ENCODE measurements at regions of chr20 and their contacts with region 1.

Region 1: GRCh38 chr20:6828794-6829423 is 61.4 kb downstream of the BMP2 start:
- DNase-seq: no peak
- H3K4me3 ChIP-seq: no peak overlapping the region
- H3K27ac ChIP-seq: no peak overlapping the region
- H3K4me1 ChIP-seq: peaks cover 0 to 8% (median 0%) of the 10 kb centered on the region in 6 donors
- H3K27me3 ChIP-seq: no peaks in the 10 kb centered on the region
- CTCF ChIP-seq: peak in 10 of 11 experiments; percentile 8 to 71 (median 60)
- POLR2A ChIP-seq: no peak

Region 2: DNA sequence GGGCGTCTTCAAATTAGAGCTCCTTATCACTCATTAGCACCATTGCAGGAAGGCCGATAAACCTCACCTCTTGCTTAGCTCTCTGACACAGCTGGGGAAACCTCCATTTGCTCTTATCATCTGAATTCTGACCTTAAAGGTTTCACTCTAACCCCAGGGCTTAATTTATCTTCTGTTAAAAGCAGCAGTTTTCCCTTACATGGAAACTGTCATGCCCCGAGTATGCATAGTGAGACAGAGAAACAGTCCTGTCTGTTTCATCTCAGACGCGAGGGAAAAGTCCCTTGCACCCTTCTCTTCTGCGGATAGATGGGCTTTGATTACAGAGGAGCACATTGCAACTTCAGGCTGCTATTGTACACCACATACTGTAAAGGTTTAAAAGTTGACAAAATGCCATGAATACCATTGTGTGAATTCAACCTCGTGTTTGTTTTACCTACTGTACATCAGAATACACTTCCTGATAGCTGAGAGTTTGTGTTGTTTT is 253.0 kb before region 1 on chr20:
- intact Hi-C with region 1: loop called (anchors 10 kb)
- DNase-seq: no peak
- H3K4me3 ChIP-seq: no peak overlapping the region
- H3K27ac ChIP-seq: no peak overlapping the region
- H3K4me1 ChIP-seq: peaks cover 0 to 14% (median 2%) of the 10 kb centered on the region in 6 donors
- H3K27me3 ChIP-seq: no peaks in the 10 kb centered on the region
- CTCF ChIP-seq: no peak
- POLR2A ChIP-seq: no peak

Region 3: GRCh38 chr20:6613280-6613861 is 215.5 kb before region 1 on chr20:
- intact Hi-C with region 1: no loop called
- DNase-seq: no peak
- H3K4me3 ChIP-seq: no peak overlapping the region
- H3K27ac ChIP-seq: no peak overlapping the region
- H3K4me1 ChIP-seq: no peaks in the 10 kb centered on the region
- H3K27me3 ChIP-seq: no peaks in the 10 kb centered on the region
- CTCF ChIP-seq: no peak
- POLR2A ChIP-seq: no peak

Region 4: DNA sequence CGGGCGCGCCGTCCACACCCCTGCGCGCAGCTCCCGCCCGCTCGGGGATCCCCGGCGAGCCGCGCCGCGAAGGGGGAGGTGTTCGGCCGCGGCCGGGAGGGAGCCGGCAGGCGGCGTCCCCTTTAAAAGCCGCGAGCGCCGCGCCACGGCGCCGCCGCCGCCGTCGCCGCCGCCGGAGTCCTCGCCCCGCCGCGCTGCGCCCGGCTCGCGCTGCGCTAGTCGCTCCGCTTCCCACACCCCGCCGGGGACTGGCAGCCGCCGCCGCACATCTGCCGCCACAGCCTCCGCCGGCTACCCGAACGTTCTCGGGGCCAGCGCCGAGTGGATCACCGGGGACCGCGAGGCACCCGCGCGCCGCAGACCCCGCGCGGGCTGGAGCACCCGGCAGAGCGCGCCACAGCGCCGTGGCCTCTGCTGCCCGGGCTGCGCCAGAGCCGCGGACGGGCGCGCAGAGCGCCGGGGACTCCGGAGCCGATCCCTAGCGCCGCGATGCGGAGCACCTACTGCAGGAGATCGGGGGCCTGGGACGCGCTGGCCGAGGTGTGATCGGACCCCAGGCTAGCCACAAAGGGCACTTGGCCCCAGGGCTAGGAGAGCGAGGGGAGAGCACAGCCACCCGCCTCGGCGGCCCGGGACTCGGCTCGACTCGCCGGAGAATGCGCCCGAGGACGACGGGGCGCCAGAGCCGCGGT is 61.2 kb before region 1 on chr20 and contains the start of gene BMP2:
- intact Hi-C with region 1: no loop called
- DNase-seq: peak; percentile 81
- H3K4me3 ChIP-seq: peak within 1 kb of the TSS; percentile 46 to 77 (median 61)
- H3K27ac ChIP-seq: peak within 1 kb of the TSS; percentile 72 to 88 (median 85)
- H3K4me1 ChIP-seq: peaks cover 5 to 70% (median 33%) of the 10 kb centered on the region in 6 donors
- H3K27me3 ChIP-seq: peaks cover 0 to 60% (median 25%) of the 10 kb centered on the region in 7 donors
- CTCF ChIP-seq: no peak
- POLR2A ChIP-seq: peak in 1 of 3 donors; percentile 83
- total RNA-seq, gene BMP2: 13.9 to 30.1 (median 18.5) TPM

Region 5: GRCh38 chr20:7285918-7286556 is 457.1 kb after region 1 on chr20:
- intact Hi-C with region 1: loop called (anchors 10 kb)
- DNase-seq: no peak
- H3K4me3 ChIP-seq: no peak overlapping the region
- H3K27ac ChIP-seq: no peak overlapping the region
- H3K4me1 ChIP-seq: peaks cover 0 to 4% (median 0%) of the 10 kb centered on the region in 6 donors
- H3K27me3 ChIP-seq: peaks cover 0 to 4% (median 0%) of the 10 kb centered on the region in 7 donors
- CTCF ChIP-seq: peak in 10 of 11 experiments; percentile 32 to 73 (median 60)
- POLR2A ChIP-seq: no peak

Region 6: DNA sequence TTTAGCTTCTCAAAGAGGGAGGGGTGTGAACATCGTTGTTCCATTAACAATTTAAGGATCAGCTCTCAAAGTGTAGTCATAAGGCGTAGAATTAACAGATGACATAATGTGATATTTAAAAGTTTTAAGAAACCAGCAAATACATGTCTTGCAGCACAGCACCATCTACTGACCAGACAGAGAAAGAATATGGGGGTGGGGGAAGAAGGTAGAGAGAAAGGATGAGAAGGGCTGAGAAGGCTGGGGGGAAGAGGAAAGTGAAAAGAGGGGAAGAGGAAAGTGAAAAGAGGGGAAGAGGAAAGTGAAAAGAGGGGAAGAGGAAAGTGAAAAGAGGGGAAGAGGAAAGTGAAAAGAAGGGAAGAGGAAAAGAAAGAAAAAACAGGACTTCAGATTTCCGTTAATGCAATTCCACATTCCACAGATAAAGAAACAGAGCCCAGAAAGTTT is 1030.5 kb after region 1 on chr20:
- intact Hi-C with region 1: loop called (anchors 5 kb)
- DNase-seq: no peak
- H3K4me3 ChIP-seq: no peak overlapping the region
- H3K27ac ChIP-seq: peak overlapping the region in 2 of 8 donors; percentile 21 to 38
- H3K4me1 ChIP-seq: no peaks in the 10 kb centered on the region
- H3K27me3 ChIP-seq: no peaks in the 10 kb centered on the region
- CTCF ChIP-seq: peak; percentile 8 to 72 (median 46)
- POLR2A ChIP-seq: no peak

Measured in spleen (tissue), 13 donors.